Activated CD8-positive, alpha-beta T cell treated with anti-CD3 and anti-CD28 coated beads, Interleukin-2, amount 10 ng/mL, durations not matched to agents 7 days and 5 days (primary cell): ENCODE measurements at regions of chr17 and their contacts with region 1.

Region 1: DNA sequence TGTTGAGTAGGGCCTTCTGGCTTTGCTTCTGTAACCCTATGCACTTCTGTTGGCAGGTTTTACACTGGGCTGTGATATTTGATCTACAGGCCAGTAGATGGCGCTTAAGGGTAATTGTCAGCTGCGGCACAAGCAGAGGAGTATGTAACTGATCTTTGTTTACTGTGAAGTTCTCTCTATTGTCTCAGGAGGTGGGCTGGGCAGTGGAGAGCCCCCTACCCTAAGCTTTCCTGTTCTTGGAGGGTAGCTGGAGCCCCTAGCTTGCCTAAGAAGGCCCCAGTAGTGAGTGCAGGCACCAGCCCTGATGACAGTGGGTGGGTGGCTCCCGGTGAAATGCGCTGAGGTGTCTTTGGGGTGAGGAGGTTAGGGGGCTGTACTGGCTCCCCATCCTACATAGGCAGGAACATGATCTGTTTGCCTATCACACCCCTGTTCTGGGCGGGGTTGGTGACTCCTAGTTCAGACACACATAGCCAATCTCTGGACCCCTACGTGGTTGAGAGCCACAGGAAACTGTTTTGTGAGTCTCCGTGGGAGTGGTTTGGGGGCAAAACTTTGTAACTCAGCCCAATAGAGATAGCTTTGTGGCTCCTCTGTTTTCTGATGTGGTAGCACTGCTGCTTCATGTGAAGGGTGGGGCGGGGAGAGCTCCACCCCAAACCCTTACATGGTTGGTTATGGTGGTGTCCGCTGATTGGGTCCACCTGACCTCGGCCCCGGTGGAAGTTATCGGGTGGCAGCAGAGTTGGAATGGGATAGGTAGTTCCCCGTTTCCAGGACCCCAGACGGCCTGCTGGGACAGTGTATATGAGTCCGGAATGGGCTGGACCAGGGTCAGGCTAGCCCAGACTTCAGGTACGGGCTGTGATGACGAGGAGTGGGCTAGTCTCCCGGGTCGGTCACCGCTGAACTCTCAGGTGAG is 60.4 kb downstream of the SLFN11 start:
- DNase-seq: peak; percentile 94
- ATAC-seq: peak; percentile 93
- H3K4me3 Mint-ChIP-seq: peak overlapping the region; percentile 89
- H3K27ac Mint-ChIP-seq: peak overlapping the region; percentile 90
- H3K4me1 Mint-ChIP-seq: peaks cover 27% of the 10 kb centered on the region
- H3K27me3 Mint-ChIP-seq: no peaks in the 10 kb centered on the region

Region 2: GRCh38 chr17:35299129-35299528 is 13.9 kb before region 1 on chr17:
- CTCF ChIA-PET with region 1: interaction called, 24 read pairs
- POLR2A ChIA-PET with region 1: no interaction called
- DNase-seq: no peak
- ATAC-seq: no peak
- H3K4me3 Mint-ChIP-seq: no peak overlapping the region
- H3K27ac Mint-ChIP-seq: no peak overlapping the region
- H3K4me1 Mint-ChIP-seq: peaks cover 5% of the 10 kb centered on the region
- H3K27me3 Mint-ChIP-seq: peaks cover 9% of the 10 kb centered on the region

Region 3: GRCh38 chr17:35345926-35346771 is 33.1 kb after region 1 on chr17:
- CTCF ChIA-PET with region 1: interaction called, 18 read pairs
- POLR2A ChIA-PET with region 1: interaction called, 3 read pairs
- DNase-seq: peak; percentile 66
- ATAC-seq: peak; percentile 71
- H3K4me3 Mint-ChIP-seq: peak overlapping the region; percentile 83
- H3K27ac Mint-ChIP-seq: peak overlapping the region; percentile 77
- H3K4me1 Mint-ChIP-seq: peaks cover 60% of the 10 kb centered on the region
- H3K27me3 Mint-ChIP-seq: peaks cover 22% of the 10 kb centered on the region

Region 4: GRCh38 chr17:35373534-35373983 is 60.5 kb after region 1 on chr17 and contains the start of gene SLFN11:
- CTCF ChIA-PET with region 1: interaction called, 19 read pairs
- POLR2A ChIA-PET with region 1: interaction called, 14 read pairs
- DNase-seq: peak; percentile 86
- ATAC-seq: peak; percentile 81
- H3K4me3 Mint-ChIP-seq: peak within 1 kb of the TSS; percentile 99
- H3K27ac Mint-ChIP-seq: peak within 1 kb of the TSS; percentile 98
- H3K4me1 Mint-ChIP-seq: peaks cover 57% of the 10 kb centered on the region
- H3K27me3 Mint-ChIP-seq: peaks cover 3% of the 10 kb centered on the region
- total RNA-seq, gene SLFN11: 40.0 to 50.1 TPM

Region 5: GRCh38 chr17:35404360-35404759 is 91.3 kb after region 1 on chr17:
- CTCF ChIA-PET with region 1: no interaction called
- POLR2A ChIA-PET with region 1: no interaction called
- DNase-seq: peak; percentile 39
- ATAC-seq: peak; percentile 84
- H3K4me3 Mint-ChIP-seq: no peak overlapping the region
- H3K27ac Mint-ChIP-seq: no peak overlapping the region
- H3K4me1 Mint-ChIP-seq: peaks cover 13% of the 10 kb centered on the region
- H3K27me3 Mint-ChIP-seq: no peaks in the 10 kb centered on the region

Region 6: DNA sequence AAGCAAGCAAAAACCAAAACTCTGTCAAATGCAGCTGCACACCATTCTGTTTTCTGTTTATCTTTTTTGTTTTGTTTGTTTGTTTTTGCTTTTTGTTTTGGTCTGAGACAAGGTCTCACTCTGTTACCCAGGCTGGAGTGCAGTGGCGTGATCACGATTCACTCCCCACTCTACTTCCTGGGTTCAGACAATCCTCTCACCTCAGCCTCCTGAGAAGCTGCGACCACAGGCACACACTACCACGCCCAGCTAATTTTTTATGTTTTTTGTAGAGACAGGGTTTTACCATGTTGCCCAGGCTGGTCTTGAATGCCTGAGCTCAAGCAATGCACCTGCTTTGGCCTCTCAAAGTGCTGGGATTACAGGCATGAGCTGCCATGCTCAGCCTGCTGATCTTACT is 154.8 kb after region 1 on chr17:
- CTCF ChIA-PET with region 1: interaction called, 10 read pairs
- POLR2A ChIA-PET with region 1: no interaction called
- DNase-seq: peak; percentile 68
- ATAC-seq: peak; percentile 88
- H3K4me3 Mint-ChIP-seq: peak overlapping the region; percentile 13
- H3K27ac Mint-ChIP-seq: peak overlapping the region; percentile 80
- H3K4me1 Mint-ChIP-seq: peaks cover 58% of the 10 kb centered on the region
- H3K27me3 Mint-ChIP-seq: no peaks in the 10 kb centered on the region

Region 7: GRCh38 chr17:35534576-35535093 is 221.6 kb after region 1 on chr17:
- CTCF ChIA-PET with region 1: interaction called, 96 read pairs
- POLR2A ChIA-PET with region 1: interaction called, 31 read pairs
- DNase-seq: no peak
- ATAC-seq: no peak
- H3K4me3 Mint-ChIP-seq: peak overlapping the region; percentile 82
- H3K27ac Mint-ChIP-seq: peak overlapping the region; percentile 98
- H3K4me1 Mint-ChIP-seq: peaks cover 39% of the 10 kb centered on the region
- H3K27me3 Mint-ChIP-seq: no peaks in the 10 kb centered on the region

Region 8: GRCh38 chr17:35578197-35578928 is 265.3 kb after region 1 on chr17 and contains the start of gene PEX12:
- CTCF ChIA-PET with region 1: interaction called, 18 read pairs
- POLR2A ChIA-PET with region 1: interaction called, 7 read pairs
- DNase-seq: peak; percentile 94
- ATAC-seq: peak; percentile 96
- H3K4me3 Mint-ChIP-seq: peak within 1 kb of the TSS; percentile 93
- H3K27ac Mint-ChIP-seq: peak within 1 kb of the TSS; percentile 96
- H3K4me1 Mint-ChIP-seq: peaks cover 28% of the 10 kb centered on the region
- H3K27me3 Mint-ChIP-seq: peaks cover under 1% of the 10 kb centered on the region
- total RNA-seq, gene PEX12: 4.0 to 4.1 TPM